CD8-positive, alpha-beta T cell (primary cell): ENCODE measurements at regions of chr2 and their contacts with region 1.

Region 1: DNA sequence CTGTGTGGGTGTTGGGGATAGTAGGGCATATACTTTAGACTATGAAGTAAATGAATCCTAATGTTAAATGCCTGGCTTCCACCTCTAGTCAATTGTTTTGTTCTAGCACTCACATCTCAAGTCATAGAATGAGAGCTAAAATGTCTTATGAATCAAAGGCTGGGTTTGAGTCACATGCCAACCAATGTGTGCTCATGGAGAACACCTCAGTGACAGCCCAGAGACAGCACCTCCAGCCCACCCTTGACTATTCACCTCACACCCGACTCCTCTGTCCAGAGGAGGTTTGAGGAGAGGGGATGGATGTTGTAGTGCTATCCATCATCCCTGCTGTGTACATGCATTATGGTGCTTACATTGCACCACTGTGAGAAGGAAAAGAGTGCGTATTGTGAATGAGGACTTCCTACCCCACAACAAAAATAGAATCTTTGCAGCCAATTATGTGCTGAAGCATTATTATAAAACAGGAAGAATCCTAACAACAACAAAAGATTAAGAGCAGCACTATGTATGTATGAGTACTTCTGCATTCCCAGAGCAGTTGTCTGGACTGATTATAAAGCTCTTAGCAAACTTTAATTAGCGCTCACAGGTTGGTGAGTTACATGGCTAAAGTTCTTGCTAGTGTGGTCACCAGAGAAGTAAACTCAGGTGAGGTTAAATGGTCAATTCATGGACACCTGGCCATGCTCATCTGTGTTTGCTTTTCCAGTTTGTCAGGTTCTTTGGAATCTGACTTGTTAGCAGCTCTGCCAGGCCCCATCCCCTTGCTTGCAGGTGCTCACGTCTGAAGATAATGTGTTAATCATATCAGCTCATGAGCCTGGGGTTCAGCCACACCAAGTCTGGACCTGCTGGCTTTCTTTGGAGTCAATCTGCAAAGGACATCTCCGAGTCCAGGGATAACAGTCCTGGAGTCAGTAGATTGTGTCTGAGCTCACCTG is 55.3 kb upstream of the NABP1 start:
- DNase-seq: no peak
- ATAC-seq: no peak
- H3K4me3 ChIP-seq: no peak overlapping the region
- H3K4me3 Mint-ChIP-seq: no peak overlapping the region
- H3K27ac ChIP-seq: no peak overlapping the region
- H3K27ac Mint-ChIP-seq: no peak overlapping the region
- H3K4me1 ChIP-seq: peaks cover 25% of the 10 kb centered on the region
- H3K4me1 Mint-ChIP-seq: peaks cover 55% of the 10 kb centered on the region
- H3K27me3 ChIP-seq: no peaks in the 10 kb centered on the region
- H3K27me3 Mint-ChIP-seq: no peaks in the 10 kb centered on the region
- CTCF ChIP-seq: no peak

Region 2: GRCh38 chr2:191533693-191534180 is 88.9 kb before region 1 on chr2:
- CTCF ChIA-PET with region 1: no interaction called
- POLR2A ChIA-PET with region 1: no interaction called
- intact Hi-C with region 1: no loop called
- DNase-seq: no peak
- ATAC-seq: no peak
- H3K4me3 ChIP-seq: no peak overlapping the region
- H3K4me3 Mint-ChIP-seq: no peak overlapping the region
- H3K27ac ChIP-seq: no peak overlapping the region
- H3K27ac Mint-ChIP-seq: no peak overlapping the region
- H3K4me1 ChIP-seq: no peaks in the 10 kb centered on the region
- H3K4me1 Mint-ChIP-seq: no peaks in the 10 kb centered on the region
- H3K27me3 ChIP-seq: no peaks in the 10 kb centered on the region
- H3K27me3 Mint-ChIP-seq: peaks cover 2% of the 10 kb centered on the region
- CTCF ChIP-seq: no peak

Region 3: GRCh38 chr2:191642541-191642940 is 19.9 kb after region 1 on chr2:
- CTCF ChIA-PET with region 1: interaction called, 4 read pairs
- POLR2A ChIA-PET with region 1: interaction called, 6 read pairs
- intact Hi-C with region 1: loop called (anchors 2 kb)
- DNase-seq: no peak
- ATAC-seq: no peak
- H3K4me3 ChIP-seq: no peak overlapping the region
- H3K4me3 Mint-ChIP-seq: no peak overlapping the region
- H3K27ac ChIP-seq: no peak overlapping the region
- H3K27ac Mint-ChIP-seq: no peak overlapping the region
- H3K4me1 ChIP-seq: peaks cover 19% of the 10 kb centered on the region
- H3K4me1 Mint-ChIP-seq: peaks cover 26% of the 10 kb centered on the region
- H3K27me3 ChIP-seq: peaks cover 0 to 2% of the 10 kb centered on the region in 2 experiments
- H3K27me3 Mint-ChIP-seq: no peaks in the 10 kb centered on the region
- CTCF ChIP-seq: no peak